Psoas muscle (tissue), 8 donors: ENCODE measurements at regions of chr3 and their contacts with region 1.

Region 1: DNA sequence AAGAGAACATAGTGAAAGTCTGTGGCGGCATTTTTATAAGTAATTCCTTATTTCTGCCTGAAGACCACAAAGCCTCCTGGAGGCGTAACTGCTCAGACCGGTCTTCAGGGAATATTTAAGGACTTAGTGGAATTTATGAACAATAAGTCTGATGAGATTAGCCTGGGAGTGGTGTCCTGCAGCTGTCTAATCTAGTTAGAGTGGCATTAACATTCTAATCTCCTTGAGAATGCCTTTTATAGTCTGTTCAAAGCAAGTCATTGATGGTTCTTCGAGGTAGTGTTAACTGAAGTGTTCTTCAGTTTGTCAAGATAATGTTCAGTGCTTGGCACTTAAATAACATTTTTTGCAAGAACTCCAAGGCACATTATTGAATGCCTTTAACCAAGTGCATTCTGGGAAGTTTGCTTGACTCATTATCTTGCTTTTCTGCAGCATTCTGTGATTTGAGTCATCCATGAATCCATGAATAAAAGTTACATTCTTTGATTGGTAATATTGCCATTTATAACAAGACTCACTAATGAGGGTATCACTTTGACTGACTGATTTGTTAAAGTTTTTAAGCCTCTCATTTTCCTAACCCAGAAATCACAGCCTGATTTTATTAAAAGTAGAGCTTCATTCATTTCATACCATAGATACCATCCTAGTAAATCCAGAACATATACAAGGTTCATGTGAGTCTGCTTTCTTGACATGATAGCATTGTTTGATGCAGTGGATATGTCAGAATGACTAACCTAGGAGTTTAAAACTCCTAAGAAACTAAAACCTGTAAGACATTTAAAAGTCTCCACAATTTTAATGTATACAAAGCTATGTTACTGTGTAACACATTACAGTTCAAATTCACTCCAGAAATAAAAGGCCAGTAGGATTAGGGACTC is 12.5 kb downstream of the RBM5 start:
- DNase-seq: no peak
- ATAC-seq: no peak
- H3K4me3 ChIP-seq: no peak overlapping the region
- H3K27ac ChIP-seq: no peak overlapping the region
- H3K4me1 ChIP-seq: no peaks in the 10 kb centered on the region
- H3K27me3 ChIP-seq: no peaks in the 10 kb centered on the region
- CTCF ChIP-seq: no peak

Region 2: DNA sequence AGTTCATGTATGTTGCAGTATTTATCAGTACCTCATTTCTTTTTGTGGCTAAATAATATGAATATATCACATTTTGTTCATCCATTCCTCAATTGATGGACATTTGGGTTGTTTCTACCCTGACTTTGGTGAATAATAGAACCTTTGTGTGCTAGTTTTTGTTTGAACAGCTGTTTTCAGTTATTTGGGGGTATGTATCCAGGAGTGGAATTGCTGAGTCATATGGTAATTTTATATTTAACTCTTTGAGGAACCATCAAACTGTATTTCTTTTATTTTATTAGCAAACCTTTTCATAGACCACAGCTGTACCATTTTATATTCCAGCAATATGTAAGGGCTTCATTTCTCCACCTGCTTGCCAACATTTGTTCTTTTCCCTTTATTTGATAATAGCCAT is 50.8 kb before region 1 on chr3:
- intact Hi-C with region 1: loop called in 1 of 2 experiments (anchors 10 kb)
- DNase-seq: no peak
- ATAC-seq: no peak
- H3K4me3 ChIP-seq: no peak overlapping the region
- H3K27ac ChIP-seq: no peak overlapping the region
- H3K4me1 ChIP-seq: no peaks in the 10 kb centered on the region
- H3K27me3 ChIP-seq: no peaks in the 10 kb centered on the region
- CTCF ChIP-seq: no peak

Region 3: GRCh38 chr3:50068134-50068533 is 33.1 kb before region 1 on chr3:
- intact Hi-C with region 1: loop called in 1 of 2 experiments (anchors 5 kb)
- DNase-seq: no peak
- ATAC-seq: no peak
- H3K4me3 ChIP-seq: no peak overlapping the region
- H3K27ac ChIP-seq: no peak overlapping the region
- H3K4me1 ChIP-seq: no peaks in the 10 kb centered on the region
- H3K27me3 ChIP-seq: no peaks in the 10 kb centered on the region
- CTCF ChIP-seq: no peak

Region 4: GRCh38 chr3:50192689-50193141 is 91.5 kb after region 1 on chr3:
- intact Hi-C with region 1: no loop called
- DNase-seq: peak; percentile 64 to 80
- ATAC-seq: peak; percentile 36 to 66 (median 53)
- H3K4me3 ChIP-seq: peak overlapping the region; percentile 25
- H3K27ac ChIP-seq: no peak overlapping the region
- H3K4me1 ChIP-seq: peaks cover 9% of the 10 kb centered on the region
- H3K27me3 ChIP-seq: peaks cover 0 to 18% (median 0%) of the 10 kb centered on the region in 3 donors
- CTCF ChIP-seq: peak; percentile 86